Activated CD4-positive, alpha-beta memory T cell treated with anti-CD3 and anti-CD28 coated beads for 36 hours (primary cell): ENCODE measurements at regions of chr5 and their contacts with region 1.

Region 1: GRCh38 chr5:126808521-126808988 is 31.6 kb downstream of the LMNB1 start:
- DNase-seq: no peak
- H3K4me3 Mint-ChIP-seq: no peak overlapping the region
- H3K27ac Mint-ChIP-seq: peak overlapping the region; percentile 16
- H3K4me1 Mint-ChIP-seq: peaks cover 55% of the 10 kb centered on the region
- H3K27me3 Mint-ChIP-seq: no peaks in the 10 kb centered on the region

Region 2: GRCh38 chr5:126519634-126520592 is 288.6 kb before region 1 on chr5:
- CTCF ChIA-PET with region 1: no interaction called
- POLR2A ChIA-PET with region 1: no interaction called
- intact Hi-C with region 1: no loop called
- DNase-seq: no peak
- H3K4me3 Mint-ChIP-seq: no peak overlapping the region
- H3K27ac Mint-ChIP-seq: no peak overlapping the region
- H3K4me1 Mint-ChIP-seq: no peaks in the 10 kb centered on the region
- H3K27me3 Mint-ChIP-seq: peaks cover 2% of the 10 kb centered on the region

Region 3: DNA sequence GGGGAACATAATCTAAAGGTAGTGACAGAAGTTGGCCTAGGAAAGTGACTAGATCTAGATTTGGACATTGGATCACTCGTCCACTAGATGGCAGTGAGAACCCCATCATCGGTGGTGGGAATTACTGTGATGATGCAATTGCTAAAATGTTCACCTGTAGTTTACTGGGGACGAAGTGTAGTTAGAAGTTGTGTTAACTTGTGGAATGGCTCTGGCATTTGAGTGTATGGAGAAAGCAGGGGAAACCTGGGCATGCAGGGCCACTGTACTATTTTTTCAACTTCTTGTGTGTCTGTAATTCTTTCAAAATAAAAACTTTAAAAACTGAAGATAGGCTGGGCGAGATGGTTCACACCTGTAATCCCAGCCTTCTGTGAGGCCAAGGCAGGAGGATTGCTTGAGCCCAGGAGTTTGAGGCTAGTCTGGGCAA is 132.3 kb before region 1 on chr5:
- CTCF ChIA-PET with region 1: interaction called, 37 read pairs
- POLR2A ChIA-PET with region 1: interaction called, 4 read pairs
- intact Hi-C with region 1: loop called (anchors 1 kb)
- DNase-seq: peak; percentile 78
- H3K4me3 Mint-ChIP-seq: no peak overlapping the region
- H3K27ac Mint-ChIP-seq: peak overlapping the region; percentile 20
- H3K4me1 Mint-ChIP-seq: peaks cover 3% of the 10 kb centered on the region
- H3K27me3 Mint-ChIP-seq: no peaks in the 10 kb centered on the region

Region 4: DNA sequence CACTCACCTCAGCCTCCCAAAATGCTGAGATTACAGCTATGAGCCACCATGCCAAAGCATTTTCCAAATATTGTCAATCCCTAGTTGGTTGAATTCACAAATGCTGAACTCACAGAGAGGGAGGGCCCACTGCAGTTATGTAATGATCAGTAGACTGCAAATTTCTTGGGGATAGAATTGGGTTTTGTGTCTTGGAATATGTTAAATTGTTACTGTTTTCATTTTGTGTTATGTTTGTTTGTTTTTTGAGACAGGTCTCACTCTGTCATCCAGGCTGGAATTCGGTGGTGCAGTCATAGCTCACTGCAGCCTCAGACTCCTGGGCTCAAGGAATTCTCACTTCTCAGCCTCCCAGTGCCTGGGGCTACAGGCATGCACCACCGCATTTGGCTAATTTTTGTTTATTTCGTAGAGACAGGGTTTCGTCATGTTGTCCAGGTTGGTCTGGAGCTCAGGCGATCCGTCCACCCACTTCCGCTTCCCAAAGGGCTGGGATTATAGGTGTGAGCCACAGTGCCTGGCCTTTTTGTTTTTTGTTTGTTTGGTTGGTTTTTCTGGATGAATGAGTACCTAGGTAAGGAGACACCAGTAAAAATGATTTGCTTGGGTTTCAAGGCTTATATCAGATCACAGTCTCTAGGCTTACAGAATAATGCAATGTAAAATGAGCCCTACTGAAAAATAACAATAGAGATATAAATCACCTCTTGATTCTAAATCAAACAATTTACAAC is 63.1 kb before region 1 on chr5:
- CTCF ChIA-PET with region 1: interaction called, 3 read pairs
- POLR2A ChIA-PET with region 1: interaction called, 8 read pairs
- intact Hi-C with region 1: loop called (anchors 1 kb)
- DNase-seq: no peak
- H3K4me3 Mint-ChIP-seq: no peak overlapping the region
- H3K27ac Mint-ChIP-seq: no peak overlapping the region
- H3K4me1 Mint-ChIP-seq: peaks cover 30% of the 10 kb centered on the region
- H3K27me3 Mint-ChIP-seq: peaks cover 1% of the 10 kb centered on the region

Region 5: GRCh38 chr5:126846344-126846743 is 37.8 kb after region 1 on chr5:
- CTCF ChIA-PET with region 1: no interaction called
- POLR2A ChIA-PET with region 1: no interaction called
- intact Hi-C with region 1: loop called (anchors 5 kb)
- DNase-seq: no peak
- H3K4me3 Mint-ChIP-seq: no peak overlapping the region
- H3K27ac Mint-ChIP-seq: no peak overlapping the region
- H3K4me1 Mint-ChIP-seq: peaks cover 22% of the 10 kb centered on the region
- H3K27me3 Mint-ChIP-seq: no peaks in the 10 kb centered on the region

Region 6: DNA sequence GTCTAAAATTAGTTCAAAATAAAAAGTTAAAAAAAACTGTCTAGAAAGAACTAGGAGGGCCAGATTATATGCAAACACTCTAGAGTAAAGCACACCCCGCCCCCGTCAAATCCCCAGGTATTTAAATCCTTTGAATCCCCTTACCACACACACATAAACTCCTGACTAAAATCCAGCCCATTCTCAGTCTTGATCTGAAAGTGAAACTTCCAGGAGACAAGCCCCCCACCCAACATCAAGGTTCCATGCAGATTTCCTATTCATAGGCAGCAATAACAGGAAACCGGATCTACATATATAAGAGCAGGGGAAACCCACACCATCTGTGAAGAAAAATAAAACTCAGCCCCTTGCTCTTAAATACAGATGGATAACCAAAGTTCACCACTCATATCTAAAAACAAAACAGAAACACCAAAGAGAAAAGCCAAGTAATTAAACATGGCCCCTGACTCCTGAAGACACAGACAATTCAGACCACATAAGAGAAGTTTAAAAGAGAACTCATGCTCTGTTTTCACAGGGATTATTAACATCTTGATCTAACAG is 179.5 kb after region 1 on chr5:
- CTCF ChIA-PET with region 1: no interaction called
- POLR2A ChIA-PET with region 1: no interaction called
- intact Hi-C with region 1: loop called (anchors 1 kb)
- DNase-seq: peak; percentile 50
- H3K4me3 Mint-ChIP-seq: peak overlapping the region; percentile 31
- H3K27ac Mint-ChIP-seq: peak overlapping the region; percentile 76
- H3K4me1 Mint-ChIP-seq: peaks cover 22% of the 10 kb centered on the region
- H3K27me3 Mint-ChIP-seq: no peaks in the 10 kb centered on the region